OCI-LY7 (cell line): ENCODE measurements at regions of chr14 and their contacts with region 1.

Region 1: GRCh38 chr14:73503648-73504047 is 12.9 kb downstream of the RIOX1 start:
- DNase-seq: peak; percentile 25
- H3K4me3 ChIP-seq: no peak overlapping the region
- H3K27ac ChIP-seq: no peak overlapping the region
- H3K4me1 ChIP-seq: no peaks in the 10 kb centered on the region
- CTCF ChIP-seq: no peak

Region 2: GRCh38 chr14:73633116-73634010 is 129.7 kb after region 1 on chr14:
- CTCF ChIA-PET with region 1: no interaction called
- POLR2A ChIA-PET with region 1: no interaction called
- intact Hi-C with region 1: loop called (anchors 5 kb)
- DNase-seq: peak; percentile 60
- H3K4me3 ChIP-seq: peak overlapping the region; percentile 14
- H3K27ac ChIP-seq: no peak overlapping the region
- H3K4me1 ChIP-seq: peaks cover 7% of the 10 kb centered on the region
- CTCF ChIP-seq: peak; percentile 83

Region 3: GRCh38 chr14:73870525-73871235 is 367.0 kb after region 1 on chr14:
- CTCF ChIA-PET with region 1: no interaction called
- POLR2A ChIA-PET with region 1: no interaction called
- intact Hi-C with region 1: loop called (anchors 2 kb)
- DNase-seq: no peak
- H3K4me3 ChIP-seq: no peak overlapping the region
- H3K27ac ChIP-seq: no peak overlapping the region
- H3K4me1 ChIP-seq: no peaks in the 10 kb centered on the region
- CTCF ChIP-seq: no peak